ENCODE measurements at regions of chr16 and their contacts with region 1.

Region 1: GRCh38 chr16:85554112-85554813 is 58.9 kb upstream of the GSE1 start:
- DNase-seq: peak in 1 of 2 donors; percentile 88
- ATAC-seq: peak; percentile 66
- H3K4me3 ChIP-seq: peak overlapping the region; percentile 74 to 83
- H3K27ac ChIP-seq: peak overlapping the region in 1 of 2 donors; percentile 36
- H3K4me1 ChIP-seq: no peaks in the 10 kb centered on the region
- H3K27me3 ChIP-seq: no peaks in the 10 kb centered on the region

Region 2: DNA sequence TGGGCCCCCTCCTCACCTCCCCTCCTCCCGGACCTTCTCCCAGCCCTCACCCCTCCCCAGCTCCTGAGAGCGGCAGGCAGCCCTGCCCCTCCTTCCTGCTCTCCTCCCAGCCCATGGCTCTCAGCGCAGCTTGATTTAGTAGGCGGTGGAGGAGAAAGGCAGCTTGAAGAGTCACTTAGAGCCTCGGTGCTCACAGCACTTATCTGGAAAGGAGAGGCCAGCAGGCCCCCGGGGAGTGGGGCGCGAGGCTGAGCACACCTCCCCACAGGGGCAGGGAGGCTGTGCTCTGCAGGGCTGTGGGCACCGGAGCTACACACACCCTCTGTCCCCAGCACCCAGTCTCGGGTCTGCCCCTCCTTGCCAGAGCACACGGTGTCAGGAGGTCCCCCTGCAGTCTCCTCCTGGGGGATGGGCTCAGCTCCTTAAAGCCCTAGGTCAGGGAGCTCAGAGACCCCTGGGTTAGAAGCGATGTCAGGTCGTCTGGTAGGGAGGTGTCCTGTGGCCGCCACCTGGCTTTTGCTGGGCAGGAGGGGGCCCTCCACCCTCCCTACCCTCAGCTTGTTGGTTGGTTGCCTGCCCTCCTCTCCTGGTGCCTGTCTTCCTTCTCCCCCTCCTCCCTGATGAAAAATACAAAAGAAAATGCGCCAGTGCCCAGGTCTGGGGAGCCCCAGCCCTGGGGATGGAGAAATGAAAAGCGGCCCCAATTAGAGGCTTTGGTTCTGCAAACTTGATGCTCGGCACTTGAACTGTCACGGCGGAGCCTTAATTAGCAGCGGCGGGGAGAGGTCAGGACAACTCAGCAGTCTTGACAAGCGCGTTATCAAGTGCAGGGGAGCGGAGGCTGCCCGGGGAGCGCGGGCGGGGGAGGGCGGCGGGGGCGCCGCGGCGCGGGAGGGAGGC is 92.2 kb before region 1 on chr16:
- intact Hi-C with region 1: loop called in 1 of 2 experiments (anchors 10 kb)
- DNase-seq: no peak
- ATAC-seq: peak; percentile 42
- H3K4me3 ChIP-seq: peak overlapping the region in 1 of 2 donors; percentile 20
- H3K27ac ChIP-seq: no peak overlapping the region
- H3K4me1 ChIP-seq: no peaks in the 10 kb centered on the region
- H3K27me3 ChIP-seq: no peaks in the 10 kb centered on the region

Region 3: DNA sequence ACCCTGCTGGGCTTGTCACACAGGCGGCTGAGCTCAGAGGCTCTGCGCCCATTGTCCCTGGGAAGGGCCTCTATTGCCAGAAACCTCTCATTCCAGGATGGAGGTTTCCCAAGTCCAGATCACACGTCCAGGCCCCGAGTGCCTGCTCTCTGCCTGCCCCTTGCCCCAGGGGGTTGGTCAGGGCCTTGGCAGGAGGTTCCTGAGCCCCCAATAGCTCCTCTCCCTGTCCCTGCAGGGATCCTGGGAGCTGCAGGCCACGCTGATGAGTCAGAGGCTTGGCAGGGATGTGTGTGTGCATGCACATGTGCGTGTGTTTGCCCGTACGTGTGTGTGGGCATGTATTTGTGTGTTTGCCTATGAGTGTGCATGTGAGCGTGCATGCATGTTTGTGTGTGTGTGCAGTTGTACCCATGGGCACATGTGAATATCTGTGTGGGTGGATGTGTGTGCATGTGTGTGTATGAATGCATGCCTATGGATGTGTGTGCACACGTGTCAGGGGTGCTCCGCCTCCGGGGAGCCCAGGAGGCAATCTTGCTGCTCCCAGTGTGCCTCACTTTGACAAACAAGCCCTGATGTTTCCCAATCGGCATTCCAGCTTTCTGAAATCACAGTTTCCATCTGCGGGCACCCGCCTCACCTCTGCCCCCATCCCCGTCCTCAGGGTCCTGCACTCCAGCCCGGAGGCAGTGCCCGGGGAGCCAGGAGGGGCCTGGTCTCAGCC is 39.5 kb before region 1 on chr16:
- intact Hi-C with region 1: loop called in 1 of 2 experiments (anchors 1 kb)
- DNase-seq: peak; percentile 91 to 93
- ATAC-seq: peak; percentile 87
- H3K4me3 ChIP-seq: no peak overlapping the region
- H3K27ac ChIP-seq: peak overlapping the region; percentile 9 to 69
- H3K4me1 ChIP-seq: peaks cover 0 to 5% of the 10 kb centered on the region in 2 donors
- H3K27me3 ChIP-seq: no peaks in the 10 kb centered on the region

Measured in aorta (tissue), 5 donors.